ENCODE measurements at regions of chr7 and their contacts with region 1.

Region 1: GRCh38 chr7:48083114-48083830 is 5.8 kb upstream of the UPP1 start:
- DNase-seq: peak; percentile 24 to 57 (median 39)
- H3K4me3 ChIP-seq: no peak overlapping the region
- H3K4me3 Mint-ChIP-seq: peak overlapping the region in 6 of 8 donors; percentile 46 to 78 (median 62)
- H3K27ac ChIP-seq: no peak overlapping the region
- H3K27ac Mint-ChIP-seq: peak overlapping the region; percentile 19 to 88 (median 64)
- H3K4me1 ChIP-seq: peaks cover 58% of the 10 kb centered on the region
- H3K4me1 Mint-ChIP-seq: peaks cover 46 to 56% (median 51%) of the 10 kb centered on the region in 4 donors
- H3K27me3 ChIP-seq: no peaks in the 10 kb centered on the region
- H3K27me3 Mint-ChIP-seq: no peaks in the 10 kb centered on the region

Region 2: GRCh38 chr7:48094751-48095562 is 11.7 kb after region 1 on chr7:
- CTCF ChIA-PET with region 1: interaction called, 4 read pairs
- POLR2A ChIA-PET with region 1: interaction called, 20 read pairs
- intact Hi-C with region 1: loop called (anchors 2 kb)
- DNase-seq: no peak
- H3K4me3 ChIP-seq: no peak overlapping the region
- H3K4me3 Mint-ChIP-seq: peak overlapping the region in 7 of 8 donors; percentile 25 to 54 (median 30)
- H3K27ac ChIP-seq: no peak overlapping the region
- H3K27ac Mint-ChIP-seq: peak overlapping the region; percentile 33 to 92 (median 74)
- H3K4me1 ChIP-seq: peaks cover 100% of the 10 kb centered on the region
- H3K4me1 Mint-ChIP-seq: peaks cover 63 to 98% (median 84%) of the 10 kb centered on the region in 4 donors
- H3K27me3 ChIP-seq: no peaks in the 10 kb centered on the region
- H3K27me3 Mint-ChIP-seq: no peaks in the 10 kb centered on the region

Measured in CD4-positive, alpha-beta memory T cell (primary cell).